Esophagus muscularis mucosa (tissue), 4 donors: ENCODE measurements at regions of chr13 and their contacts with region 1.

Region 1: DNA sequence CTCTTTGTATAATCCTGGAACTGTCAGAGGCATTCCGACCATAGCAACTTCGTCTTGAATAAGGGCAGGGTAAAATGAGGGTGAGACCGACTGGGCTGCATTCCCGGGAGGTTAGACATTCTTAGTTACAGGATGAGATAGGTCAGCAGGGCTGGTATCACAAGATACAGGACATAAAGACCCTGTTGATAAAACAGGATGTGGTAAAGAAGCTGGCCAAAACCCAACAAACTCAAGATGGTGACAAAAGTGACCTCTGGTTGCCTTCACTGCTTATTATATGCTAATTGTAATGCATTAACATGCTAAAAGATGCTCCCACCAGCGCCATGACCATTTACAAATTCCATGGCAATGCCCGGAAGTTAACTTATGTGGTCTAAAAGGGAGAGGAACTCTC is 27.7 kb upstream of the MBNL2 start:
- DNase-seq: no peak
- H3K4me3 ChIP-seq: no peak overlapping the region
- H3K27ac ChIP-seq: no peak overlapping the region
- H3K4me1 ChIP-seq: no peaks in the 10 kb centered on the region
- H3K27me3 ChIP-seq: no peaks in the 10 kb centered on the region
- CTCF ChIP-seq: no peak
- EP300 ChIP-seq: no peak
- POLR2A ChIP-seq: no peak

Region 2: DNA sequence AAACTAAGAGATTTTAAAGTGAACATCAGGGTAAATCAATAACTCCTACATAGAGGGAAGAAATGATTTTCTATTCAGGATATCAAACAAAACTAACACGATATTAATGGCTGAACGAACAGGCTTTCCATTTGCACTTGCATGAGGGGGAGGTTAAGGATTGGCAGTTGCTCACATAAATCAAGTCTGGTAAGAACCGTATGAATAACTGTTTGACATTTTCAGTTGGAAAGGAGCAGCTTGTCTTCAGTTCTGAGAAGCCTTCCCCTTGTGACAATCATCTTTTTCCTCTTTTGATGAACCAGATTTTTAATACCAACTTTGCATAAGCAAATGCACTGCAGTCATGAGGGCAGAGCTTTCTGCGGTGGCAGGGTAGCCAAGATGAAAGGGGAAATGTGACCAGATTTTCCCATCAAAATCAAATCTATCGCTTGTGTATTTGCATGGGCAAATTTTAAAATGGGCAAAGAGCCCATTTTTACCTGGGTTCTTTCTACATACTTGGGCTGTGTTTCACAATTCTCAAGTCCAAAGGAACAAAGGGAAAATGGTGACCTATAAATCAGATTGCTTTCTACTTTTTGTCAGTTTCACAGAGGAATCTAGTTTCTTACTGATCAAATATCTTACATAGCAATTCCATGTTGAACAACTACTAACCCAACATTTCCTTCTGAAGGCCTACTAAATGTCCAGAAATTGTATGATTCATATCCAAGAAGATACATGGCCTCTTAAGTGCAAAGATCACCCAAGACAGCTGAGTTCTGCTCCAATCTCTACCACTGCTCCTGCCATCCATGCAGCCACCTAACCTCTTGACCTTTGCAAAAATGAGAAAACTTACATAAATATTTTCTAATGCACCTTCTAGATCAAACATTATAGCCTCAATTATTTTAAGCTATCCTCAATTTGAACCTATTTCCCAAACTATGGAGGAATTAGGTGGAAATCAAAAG is 449.8 kb before region 1 on chr13:
- intact Hi-C with region 1: no loop called
- DNase-seq: no peak
- H3K4me3 ChIP-seq: no peak overlapping the region
- H3K27ac ChIP-seq: no peak overlapping the region
- H3K4me1 ChIP-seq: no peaks in the 10 kb centered on the region
- H3K27me3 ChIP-seq: no peaks in the 10 kb centered on the region
- CTCF ChIP-seq: no peak
- EP300 ChIP-seq: no peak
- POLR2A ChIP-seq: no peak

Region 3: GRCh38 chr13:97141564-97142005 is 52.9 kb before region 1 on chr13:
- intact Hi-C with region 1: loop called (anchors 10 kb)
- DNase-seq: no peak
- H3K4me3 ChIP-seq: peak overlapping the region in 1 of 4 donors; percentile 19
- H3K27ac ChIP-seq: peak overlapping the region in 1 of 4 donors; percentile 22
- H3K4me1 ChIP-seq: peaks cover 12 to 22% (median 19%) of the 10 kb centered on the region in 4 donors
- H3K27me3 ChIP-seq: no peaks in the 10 kb centered on the region
- CTCF ChIP-seq: no peak
- EP300 ChIP-seq: no peak
- POLR2A ChIP-seq: no peak